Activated T-helper 2 cell treated with anti-CD3 and anti-CD28 coated beads, Interferon-gamma antibody, Interleukin-2, Interleukin-4, amounts not matched to agents 10 μg/mL and 5 μg/mL and 100 μg/mL, durations not matched to agents 14 hours and 24 hours and 36 hours (primary cell): ENCODE measurements at regions of chr18 and their contacts with region 1.

Region 1: DNA sequence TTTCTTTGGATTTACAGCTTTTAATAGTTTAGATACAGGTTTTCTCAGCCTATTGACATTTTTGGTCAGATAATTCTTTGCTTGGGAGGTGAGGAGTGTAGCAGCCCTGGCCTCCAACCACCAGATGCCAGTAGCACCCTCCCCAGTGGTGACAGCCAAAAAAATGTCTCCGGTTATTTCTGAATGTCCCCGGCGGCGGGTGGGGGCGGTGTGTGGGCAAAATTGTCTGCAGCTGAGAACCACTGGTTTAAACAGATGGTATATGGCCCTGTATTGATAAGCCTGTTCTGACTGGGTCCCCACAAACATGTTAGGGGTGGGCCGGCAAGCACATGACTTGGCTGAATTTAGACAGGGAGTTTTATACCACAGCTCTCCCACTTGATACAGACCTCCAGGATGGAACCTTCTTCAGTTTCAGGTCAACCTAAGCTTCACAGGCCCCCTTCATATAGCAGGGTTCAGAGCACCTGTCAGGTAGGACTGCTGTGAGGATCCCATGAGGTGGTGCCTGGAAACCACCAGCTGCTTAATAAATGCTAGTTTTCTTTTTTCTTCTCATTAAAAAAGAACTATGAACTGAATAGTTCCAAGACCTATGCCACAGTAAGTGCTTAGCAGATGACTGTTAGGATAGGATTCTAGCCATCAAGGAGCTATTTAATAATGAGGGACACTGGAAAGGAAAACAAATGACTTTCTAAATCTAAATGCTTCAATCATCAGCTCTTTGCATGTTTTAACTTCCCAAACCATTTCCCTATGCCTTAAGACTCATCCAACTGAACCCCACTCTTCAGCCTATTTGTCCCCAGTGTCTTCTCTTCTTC is 18.1 kb downstream of the LPIN2 start:
- DNase-seq: peak; percentile 69
- H3K4me3 Mint-ChIP-seq: peak overlapping the region; percentile 43
- H3K27ac Mint-ChIP-seq: peak overlapping the region; percentile 89
- H3K4me1 Mint-ChIP-seq: peaks cover 73% of the 10 kb centered on the region
- H3K27me3 Mint-ChIP-seq: no peaks in the 10 kb centered on the region

Region 2: GRCh38 chr18:2571200-2572143 is 423.3 kb before region 1 on chr18 and contains the starts of genes METTL4 and NDC80:
- intact Hi-C with region 1: loop called (anchors 10 kb)
- DNase-seq: peak; percentile 82
- H3K4me3 Mint-ChIP-seq: peak within 1 kb of the TSS; percentile 99
- H3K27ac Mint-ChIP-seq: peak within 1 kb of the TSS; percentile 98
- H3K4me1 Mint-ChIP-seq: peaks cover 52% of the 10 kb centered on the region
- H3K27me3 Mint-ChIP-seq: no peaks in the 10 kb centered on the region
- total RNA-seq, gene METTL4: 17.8 and 18.3 TPM in 2 replicates
- total RNA-seq, gene NDC80: 41.5 and 43.0 TPM in 2 replicates

Region 3: DNA sequence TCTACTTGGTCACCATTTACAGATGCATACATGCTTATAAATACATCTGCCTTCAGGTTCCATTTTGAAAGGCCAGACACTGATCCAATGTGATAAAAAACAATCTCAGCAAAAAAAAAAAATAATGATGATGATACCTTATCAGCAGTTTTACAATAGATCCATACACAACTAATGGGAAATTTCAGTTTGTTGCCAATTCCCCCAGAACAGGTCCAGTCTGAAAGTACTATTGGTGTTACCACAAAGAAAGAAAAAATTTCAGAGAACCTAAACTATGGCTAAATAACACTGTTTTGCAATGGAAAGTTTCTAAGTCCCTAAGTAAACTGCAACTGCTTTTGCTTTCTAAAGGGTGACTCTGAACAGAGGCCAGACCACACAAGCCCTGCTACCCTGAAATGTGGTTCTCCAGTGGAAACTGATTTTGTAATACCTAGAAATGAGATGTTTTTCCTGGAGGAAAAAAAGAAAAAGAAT is 36.0 kb before region 1 on chr18:
- intact Hi-C with region 1: loop called (anchors 1 kb)
- DNase-seq: no peak
- H3K4me3 Mint-ChIP-seq: peak overlapping the region; percentile 40
- H3K27ac Mint-ChIP-seq: peak overlapping the region; percentile 99
- H3K4me1 Mint-ChIP-seq: peaks cover 84% of the 10 kb centered on the region
- H3K27me3 Mint-ChIP-seq: no peaks in the 10 kb centered on the region

Region 4: GRCh38 chr18:3012964-3013804 is 18.4 kb after region 1 on chr18 and contains the start of gene LPIN2:
- intact Hi-C with region 1: loop called (anchors 2 kb)
- DNase-seq: peak; percentile 96
- H3K4me3 Mint-ChIP-seq: peak within 1 kb of the TSS; percentile 97
- H3K27ac Mint-ChIP-seq: peak within 1 kb of the TSS; percentile 92
- H3K4me1 Mint-ChIP-seq: peaks cover 58% of the 10 kb centered on the region
- H3K27me3 Mint-ChIP-seq: no peaks in the 10 kb centered on the region
- total RNA-seq, gene LPIN2: 87.9 and 95.9 TPM in 2 replicates

Region 5: GRCh38 chr18:3151399-3152264 is 156.8 kb after region 1 on chr18:
- intact Hi-C with region 1: loop called (anchors 1 kb)
- DNase-seq: no peak
- H3K4me3 Mint-ChIP-seq: no peak overlapping the region
- H3K27ac Mint-ChIP-seq: no peak overlapping the region
- H3K4me1 Mint-ChIP-seq: peaks cover 10% of the 10 kb centered on the region
- H3K27me3 Mint-ChIP-seq: peaks cover 6% of the 10 kb centered on the region